Colonic mucosa (tissue), 4 donors: ENCODE measurements at regions of chr18 and their contacts with region 1.

Region 1: DNA sequence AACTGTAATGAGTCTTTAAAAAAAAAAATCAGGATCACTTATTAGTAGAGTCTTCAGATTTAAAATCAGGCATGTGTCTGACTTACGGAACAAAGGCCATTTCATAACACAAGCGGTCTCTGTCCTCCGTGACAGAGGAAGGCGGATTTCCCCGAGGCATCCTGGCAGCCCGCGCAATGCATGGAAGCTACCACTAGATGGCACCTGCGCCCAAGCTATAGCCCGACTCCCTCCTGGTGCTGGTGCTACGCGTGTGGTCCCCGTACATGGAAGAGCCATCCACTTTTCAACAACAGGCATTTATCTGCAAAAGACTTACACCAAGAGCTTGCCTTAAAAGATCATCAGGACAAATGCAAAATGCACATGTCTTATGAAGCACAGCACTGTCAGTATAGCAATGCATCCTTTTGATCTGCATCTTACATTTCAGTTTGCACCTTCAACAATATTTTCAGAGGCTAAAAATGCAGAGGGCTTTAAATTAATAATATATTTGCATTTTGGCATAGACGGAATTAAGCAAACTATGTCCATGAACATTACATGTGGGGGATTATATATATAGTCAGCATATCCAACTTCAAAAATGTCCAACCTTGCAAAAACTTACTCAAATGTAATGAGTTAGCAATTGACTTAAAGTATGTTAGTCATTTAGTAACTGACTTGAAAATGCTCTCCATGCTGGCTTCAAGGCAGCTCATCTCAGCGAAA is 96.0 kb downstream of the ZNF516 start:
- DNase-seq: peak; percentile 80
- H3K4me3 ChIP-seq: no peak overlapping the region
- H3K27ac ChIP-seq: no peak overlapping the region
- H3K4me1 ChIP-seq: no peaks in the 10 kb centered on the region
- H3K27me3 ChIP-seq: no peaks in the 10 kb centered on the region
- CTCF ChIP-seq: peak; percentile 95

Region 2: GRCh38 chr18:76450452-76451395 is 51.7 kb after region 1 on chr18:
- intact Hi-C with region 1: no loop called
- DNase-seq: peak; percentile 57
- H3K4me3 ChIP-seq: peak overlapping the region; percentile 54
- H3K27ac ChIP-seq: peak overlapping the region; percentile 76
- H3K4me1 ChIP-seq: peaks cover 4% of the 10 kb centered on the region
- H3K27me3 ChIP-seq: no peaks in the 10 kb centered on the region
- CTCF ChIP-seq: no peak

Region 3: DNA sequence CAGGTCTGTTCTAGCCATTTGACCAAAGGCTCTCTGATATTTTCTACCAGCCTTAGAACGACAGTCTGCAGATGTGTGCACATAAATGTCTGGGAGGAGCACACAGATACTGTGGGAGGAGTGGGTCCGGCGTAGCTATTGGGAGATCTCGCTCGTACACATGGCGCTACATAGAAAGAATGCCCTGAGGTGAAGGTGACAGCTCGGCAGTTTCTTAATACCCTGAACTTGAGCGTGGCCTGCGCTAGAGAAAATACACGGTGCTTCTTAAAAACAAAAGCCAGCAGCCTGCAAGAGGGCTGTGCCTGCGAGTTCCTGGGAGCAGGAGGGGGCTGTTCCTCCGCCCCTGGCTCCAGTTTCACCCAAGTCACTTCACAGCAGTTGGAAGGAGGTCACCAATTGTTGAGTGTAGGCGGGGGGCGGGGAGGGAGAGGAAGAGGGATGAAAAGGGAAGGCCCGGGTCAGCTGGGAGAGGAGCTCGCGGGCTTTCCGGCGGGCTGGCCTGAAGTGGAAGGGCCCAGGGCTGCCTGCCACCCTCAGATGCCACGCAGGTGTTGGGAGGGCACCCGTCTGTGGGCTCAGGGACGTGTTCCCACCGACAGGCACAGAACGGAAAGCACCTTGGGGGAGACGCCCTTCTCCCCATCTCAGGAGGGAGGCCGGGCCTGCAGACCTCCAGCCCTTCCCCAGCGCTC is 220.7 kb after region 1 on chr18:
- intact Hi-C with region 1: loop called (anchors 5 kb)
- DNase-seq: peak; percentile 50
- H3K4me3 ChIP-seq: peak overlapping the region; percentile 7
- H3K27ac ChIP-seq: no peak overlapping the region
- H3K4me1 ChIP-seq: no peaks in the 10 kb centered on the region
- H3K27me3 ChIP-seq: no peaks in the 10 kb centered on the region
- CTCF ChIP-seq: no peak

Region 4: GRCh38 chr18:76686737-76687262 is 287.7 kb after region 1 on chr18:
- intact Hi-C with region 1: loop called (anchors 5 kb)
- DNase-seq: peak; percentile 43
- H3K4me3 ChIP-seq: no peak overlapping the region
- H3K27ac ChIP-seq: no peak overlapping the region
- H3K4me1 ChIP-seq: no peaks in the 10 kb centered on the region
- H3K27me3 ChIP-seq: no peaks in the 10 kb centered on the region
- CTCF ChIP-seq: peak; percentile 50

Region 5: DNA sequence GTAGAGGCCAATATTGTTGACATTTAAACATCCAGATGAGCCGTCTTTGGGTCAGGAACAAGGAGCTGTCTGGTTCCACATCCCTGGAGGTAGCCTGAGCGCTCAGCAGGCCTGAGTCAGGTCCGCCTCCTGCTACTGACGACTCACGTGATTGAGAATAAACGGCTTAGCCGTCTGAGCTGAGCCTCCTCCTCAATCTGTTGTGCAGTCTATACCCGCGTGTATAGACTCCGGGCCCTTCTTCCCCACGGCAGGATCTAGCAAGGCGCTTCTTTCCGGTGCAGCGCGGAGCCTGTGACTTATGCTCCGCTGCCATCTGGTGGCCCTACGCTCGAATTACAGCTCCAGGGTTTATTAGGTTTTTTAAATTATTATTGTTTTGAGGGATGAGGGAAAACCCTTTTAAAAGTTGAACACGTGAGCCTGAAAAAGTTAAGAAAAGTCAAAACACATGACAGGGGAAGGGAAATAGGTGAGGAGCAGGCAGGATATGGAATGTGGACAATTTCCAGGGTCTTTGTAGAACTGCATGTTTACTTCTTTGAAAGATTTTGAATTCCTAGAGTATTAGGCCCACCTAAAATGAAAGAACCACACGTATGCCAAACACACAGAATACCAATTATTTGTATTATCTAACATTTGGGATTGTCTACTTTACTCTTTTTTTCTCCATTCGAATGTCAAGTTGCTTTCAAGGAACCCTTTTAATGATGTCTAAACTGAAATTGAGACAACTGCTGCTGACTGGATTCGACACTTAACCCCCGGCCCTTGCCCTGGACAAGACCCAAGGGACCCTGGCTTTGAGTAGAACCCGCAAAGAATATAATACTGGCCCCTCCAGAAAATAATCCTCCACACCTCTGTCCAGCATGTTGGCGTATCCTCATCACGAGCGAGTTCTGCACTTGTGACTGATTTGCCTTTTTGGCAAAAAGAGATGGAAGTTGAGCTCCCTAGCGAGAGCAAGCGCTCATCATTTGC is 310.9 kb after region 1 on chr18:
- intact Hi-C with region 1: loop called (anchors 2 kb)
- DNase-seq: peak; percentile 58
- H3K4me3 ChIP-seq: no peak overlapping the region
- H3K27ac ChIP-seq: no peak overlapping the region
- H3K4me1 ChIP-seq: no peaks in the 10 kb centered on the region
- H3K27me3 ChIP-seq: no peaks in the 10 kb centered on the region
- CTCF ChIP-seq: peak; percentile 89

Region 6: DNA sequence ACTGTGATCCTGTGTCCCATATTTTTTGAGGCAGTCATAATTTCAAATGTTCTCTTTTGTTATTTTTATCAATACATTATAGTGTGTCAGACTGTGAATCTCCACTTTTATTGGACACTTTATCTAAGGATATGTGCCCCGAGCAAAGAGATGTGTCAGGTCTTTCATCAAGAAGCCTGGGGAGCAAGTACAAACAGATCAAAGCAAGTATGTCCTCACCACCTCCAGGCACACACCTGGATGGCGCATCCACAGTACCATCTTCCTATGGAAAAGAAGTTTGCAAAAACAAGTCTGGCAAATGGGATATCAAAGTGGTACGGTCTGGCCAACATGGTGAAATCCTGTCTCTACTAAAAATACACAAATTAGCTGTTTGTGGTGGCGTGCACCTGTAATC is 342.3 kb after region 1 on chr18:
- intact Hi-C with region 1: no loop called
- DNase-seq: no peak
- H3K4me3 ChIP-seq: no peak overlapping the region
- H3K27ac ChIP-seq: no peak overlapping the region
- H3K4me1 ChIP-seq: no peaks in the 10 kb centered on the region
- H3K27me3 ChIP-seq: no peaks in the 10 kb centered on the region
- CTCF ChIP-seq: no peak